Activated CD4-positive, alpha-beta T cell treated with anti-CD3 and anti-CD28 coated beads, Interleukin-2, amount 10 ng/mL, durations not matched to agents 7 days and 5 days (primary cell): ENCODE measurements at regions of chr2 and their contacts with region 1.

Region 1: GRCh38 chr2:26466691-26467190 is 11.2 kb downstream of the OTOF start:
- DNase-seq: no peak
- H3K4me3 Mint-ChIP-seq: no peak overlapping the region
- H3K27ac Mint-ChIP-seq: no peak overlapping the region
- H3K4me1 Mint-ChIP-seq: peaks cover 2% of the 10 kb centered on the region
- H3K27me3 Mint-ChIP-seq: no peaks in the 10 kb centered on the region

Region 2: GRCh38 chr2:26477911-26478253 is 11.1 kb after region 1 on chr2 and contains the start of gene OTOF:
- CTCF ChIA-PET with region 1: interaction called, 13 read pairs
- POLR2A ChIA-PET with region 1: no interaction called
- DNase-seq: no peak
- H3K4me3 Mint-ChIP-seq: peak within 1 kb of the TSS; percentile 60
- H3K27ac Mint-ChIP-seq: peak within 1 kb of the TSS; percentile 84
- H3K4me1 Mint-ChIP-seq: peaks cover 10% of the 10 kb centered on the region
- H3K27me3 Mint-ChIP-seq: no peaks in the 10 kb centered on the region
- total RNA-seq, gene OTOF: 11.7 to 12.3 TPM

Region 3: DNA sequence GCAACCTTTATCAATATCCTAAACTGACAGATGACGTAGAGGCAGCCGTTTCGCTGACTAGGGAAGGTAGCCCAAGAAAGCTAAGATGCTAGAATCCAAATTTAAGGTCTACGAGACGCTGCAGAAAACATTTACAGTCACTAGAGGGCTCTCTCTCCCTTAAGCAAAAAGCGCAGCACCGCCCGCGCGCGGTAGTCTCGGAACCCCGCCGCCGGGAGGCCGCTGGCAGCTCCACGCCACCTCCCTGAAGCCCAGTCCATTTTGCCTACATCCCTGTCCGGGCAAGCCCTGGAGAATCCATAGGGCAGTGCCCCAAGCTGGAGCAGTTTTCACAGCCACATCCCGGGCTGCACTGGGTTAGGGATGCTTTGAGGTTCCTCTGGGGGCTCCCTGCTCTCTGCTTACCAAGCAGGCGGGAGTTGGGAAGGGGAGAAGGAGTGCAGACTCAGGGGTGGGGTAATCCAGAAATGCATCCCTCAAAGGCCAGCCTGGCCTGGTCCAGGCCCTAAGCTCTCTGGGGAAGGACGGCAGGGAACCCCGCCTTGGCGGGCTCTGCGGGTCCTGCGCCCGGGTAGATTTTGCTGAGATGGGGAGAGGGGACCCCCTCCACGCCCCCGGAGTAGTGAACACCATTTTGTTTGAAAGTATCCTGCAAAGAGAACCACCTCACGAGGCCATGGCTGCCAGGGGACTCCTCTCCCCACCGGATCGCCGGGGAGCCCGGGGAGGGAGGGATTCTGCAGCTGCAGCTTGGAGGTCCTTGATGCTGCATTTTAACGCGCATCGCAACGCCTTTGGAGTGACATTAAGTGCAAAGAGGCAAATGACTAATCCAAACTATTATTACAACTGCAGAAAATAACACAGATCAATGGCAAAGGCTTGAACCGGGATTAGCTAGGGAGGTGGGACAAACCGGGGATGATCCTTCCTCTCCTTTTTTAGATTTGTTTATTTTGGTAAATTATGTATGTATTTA is 379.9 kb after region 1 on chr2:
- CTCF ChIA-PET with region 1: no interaction called
- POLR2A ChIA-PET with region 1: no interaction called
- DNase-seq: peak; percentile 65
- H3K4me3 Mint-ChIP-seq: peak overlapping the region; percentile 40
- H3K27ac Mint-ChIP-seq: no peak overlapping the region
- H3K4me1 Mint-ChIP-seq: peaks cover 12% of the 10 kb centered on the region
- H3K27me3 Mint-ChIP-seq: peaks cover 52% of the 10 kb centered on the region